HEK293 (cell line): ENCODE measurements at regions of chr1 and their contacts with region 1.

Region 1: GRCh38 chr1:18883636-18884418 is 18.5 kb downstream of the ALDH4A1 start:
- H3K4me3 ChIP-seq: no peak overlapping the region
- H3K27ac ChIP-seq: no peak overlapping the region
- H3K4me1 ChIP-seq: 0 out of 2 replicates have a peak, but pooled peaks cover 2% of the 10 kb centered on the region
- CTCF ChIP-seq: peak; percentile 76

Region 2: GRCh38 chr1:18322368-18323032 is 561.3 kb before region 1 on chr1:
- CTCF ChIA-PET with region 1: no interaction called
- POLR2A ChIA-PET with region 1: no interaction called
- H3K4me3 ChIP-seq: no peak overlapping the region
- H3K27ac ChIP-seq: no peak overlapping the region
- H3K4me1 ChIP-seq: no peaks in the 10 kb centered on the region
- CTCF ChIP-seq: no peak

Region 3: GRCh38 chr1:18556364-18556763 is 327.5 kb before region 1 on chr1:
- CTCF ChIA-PET with region 1: no interaction called
- POLR2A ChIA-PET with region 1: no interaction called
- H3K4me3 ChIP-seq: no peak overlapping the region
- H3K27ac ChIP-seq: no peak overlapping the region
- H3K4me1 ChIP-seq: no peaks in the 10 kb centered on the region
- CTCF ChIP-seq: no peak

Region 4: GRCh38 chr1:18928406-18928805 is 44.6 kb after region 1 on chr1:
- CTCF ChIA-PET with region 1: no interaction called
- POLR2A ChIA-PET with region 1: no interaction called
- H3K4me3 ChIP-seq: no peak overlapping the region
- H3K27ac ChIP-seq: no peak overlapping the region
- H3K4me1 ChIP-seq: no peaks in the 10 kb centered on the region
- CTCF ChIP-seq: no peak

Region 5: GRCh38 chr1:18999359-18999758 is 115.5 kb after region 1 on chr1:
- CTCF ChIA-PET with region 1: no interaction called
- POLR2A ChIA-PET with region 1: no interaction called
- H3K4me3 ChIP-seq: no peak overlapping the region
- H3K27ac ChIP-seq: no peak overlapping the region
- H3K4me1 ChIP-seq: no peaks in the 10 kb centered on the region
- CTCF ChIP-seq: no peak

Region 6: DNA sequence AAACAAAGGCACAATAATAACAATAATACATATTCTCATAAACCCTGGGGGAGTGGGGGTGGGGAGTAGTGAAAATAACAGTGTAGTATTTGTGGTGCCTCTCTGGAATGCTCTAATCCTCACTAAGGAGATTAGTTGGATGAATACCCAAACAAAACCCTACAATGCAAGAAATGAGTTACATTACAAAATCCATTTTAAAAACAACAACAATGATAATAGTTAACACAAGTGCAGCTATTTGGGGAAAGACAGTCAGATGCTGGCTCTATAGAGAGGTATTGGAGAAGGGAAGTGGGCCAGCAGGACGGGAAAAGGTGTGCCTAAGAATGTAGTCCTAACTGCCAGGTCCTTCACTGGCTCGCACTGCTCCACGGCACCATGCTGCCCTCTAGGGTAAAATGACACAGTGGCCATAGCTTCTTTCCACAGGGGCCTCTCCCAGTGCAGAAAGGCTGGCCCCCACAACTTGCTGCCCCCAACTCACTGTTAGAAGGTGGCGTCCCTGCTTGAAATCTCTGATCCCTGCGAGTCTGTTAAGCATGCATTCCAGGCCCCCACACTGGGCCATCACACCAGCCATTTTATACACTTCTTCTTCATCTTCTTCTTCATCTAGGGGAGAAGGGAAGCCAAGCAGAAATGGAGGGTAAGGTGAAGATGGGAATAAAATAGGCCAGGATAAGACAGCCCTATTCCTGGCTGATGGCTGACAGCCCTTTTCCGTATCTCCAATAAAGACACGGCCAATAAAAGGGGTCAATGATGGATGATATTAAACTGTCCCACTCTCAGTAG is 212.4 kb after region 1 on chr1:
- CTCF ChIA-PET with region 1: interaction called, 27 read pairs
- POLR2A ChIA-PET with region 1: interaction called, 3 read pairs
- H3K4me3 ChIP-seq: no peak overlapping the region
- H3K27ac ChIP-seq: no peak overlapping the region
- H3K4me1 ChIP-seq: no peaks in the 10 kb centered on the region
- CTCF ChIP-seq: peak; percentile 35; the same call in 1 of the 2 replicates

Region 7: GRCh38 chr1:19101244-19101643 is 217.4 kb after region 1 on chr1:
- CTCF ChIA-PET with region 1: interaction called, 27 read pairs
- POLR2A ChIA-PET with region 1: interaction called, 3 read pairs
- H3K4me3 ChIP-seq: no peak overlapping the region
- H3K27ac ChIP-seq: no peak overlapping the region
- H3K4me1 ChIP-seq: no peaks in the 10 kb centered on the region
- CTCF ChIP-seq: no peak

Region 8: GRCh38 chr1:19113697-19114092 is 229.9 kb after region 1 on chr1:
- CTCF ChIA-PET with region 1: interaction called, 17 read pairs
- POLR2A ChIA-PET with region 1: no interaction called
- H3K4me3 ChIP-seq: no peak overlapping the region
- H3K27ac ChIP-seq: no peak overlapping the region
- H3K4me1 ChIP-seq: no peaks in the 10 kb centered on the region
- CTCF ChIP-seq: peak; percentile 44; the same call in 1 of the 2 replicates